ENCODE measurements at regions of chr2 and their contacts with region 1.

Region 1: GRCh38 chr2:42386684-42387083 is 25.7 kb upstream of the COX7A2L start:
- DNase-seq: no peak
- H3K4me3 ChIP-seq: no peak overlapping the region
- H3K27ac ChIP-seq: no peak overlapping the region
- H3K4me1 ChIP-seq: no peaks in the 10 kb centered on the region
- H3K27me3 ChIP-seq: no peaks in the 10 kb centered on the region
- CTCF ChIP-seq: peak; percentile 73

Region 2: DNA sequence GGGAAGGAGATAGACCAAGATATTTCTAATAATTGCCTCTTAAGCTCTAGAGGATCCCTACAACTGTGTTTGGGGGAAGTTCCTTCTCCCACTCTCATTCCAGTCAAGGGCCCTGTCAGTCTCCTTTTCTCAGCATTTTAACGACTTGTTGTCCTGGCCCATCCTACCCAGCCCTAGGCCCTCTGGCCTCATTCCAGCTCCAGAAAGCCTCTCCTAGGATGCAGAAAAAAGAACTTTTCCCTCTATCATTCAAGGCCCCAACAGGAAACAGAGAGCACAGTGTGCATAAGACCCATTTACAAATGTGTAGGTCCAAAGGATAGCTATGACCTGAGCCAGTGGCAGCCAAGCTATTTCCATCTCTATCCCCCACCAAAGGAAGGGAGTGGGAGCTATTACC is 324.8 kb before region 1 on chr2:
- CTCF ChIA-PET with region 1: interaction called, 16 read pairs
- POLR2A ChIA-PET with region 1: no interaction called
- intact Hi-C with region 1: no loop called
- DNase-seq: no peak
- H3K4me3 ChIP-seq: no peak overlapping the region
- H3K27ac ChIP-seq: no peak overlapping the region
- H3K4me1 ChIP-seq: no peaks in the 10 kb centered on the region
- H3K27me3 ChIP-seq: no peaks in the 10 kb centered on the region
- CTCF ChIP-seq: no peak

Region 3: GRCh38 chr2:42138163-42139016 is 248.3 kb before region 1 on chr2:
- CTCF ChIA-PET with region 1: no interaction called
- POLR2A ChIA-PET with region 1: interaction called, 10 read pairs
- intact Hi-C with region 1: no loop called
- DNase-seq: peak; percentile 74 to 91
- H3K4me3 ChIP-seq: no peak overlapping the region
- H3K27ac ChIP-seq: peak overlapping the region; percentile 73
- H3K4me1 ChIP-seq: peaks cover 90% of the 10 kb centered on the region
- H3K27me3 ChIP-seq: no peaks in the 10 kb centered on the region
- CTCF ChIP-seq: no peak

Region 4: GRCh38 chr2:42575458-42576064 is 188.9 kb after region 1 on chr2:
- CTCF ChIA-PET with region 1: interaction called, 13 read pairs
- POLR2A ChIA-PET with region 1: no interaction called
- intact Hi-C with region 1: no loop called
- DNase-seq: no peak
- H3K4me3 ChIP-seq: no peak overlapping the region
- H3K27ac ChIP-seq: no peak overlapping the region
- H3K4me1 ChIP-seq: peaks cover 9% of the 10 kb centered on the region; the same call in 1 of the 2 replicates
- H3K27me3 ChIP-seq: no peaks in the 10 kb centered on the region
- CTCF ChIP-seq: no peak

Region 5: DNA sequence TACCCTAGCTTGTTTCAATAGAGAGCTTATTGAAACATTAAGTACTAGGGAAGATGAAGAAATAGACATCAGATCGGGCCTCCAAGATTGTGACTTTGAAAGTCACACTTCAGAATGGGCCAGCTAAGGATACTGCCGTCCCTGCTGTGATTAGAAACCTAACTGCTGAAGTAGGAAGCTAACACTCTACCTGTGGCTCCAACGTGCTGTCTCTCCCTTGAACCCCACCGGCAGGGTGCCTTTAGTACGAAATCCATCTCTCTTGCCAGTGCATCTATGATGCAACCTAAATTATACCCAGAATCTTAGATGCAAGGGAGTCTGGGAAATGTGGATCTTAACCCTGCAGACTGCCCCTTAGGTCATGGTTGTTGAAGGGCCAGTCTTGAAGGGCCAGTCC is 298.6 kb after region 1 on chr2:
- CTCF ChIA-PET with region 1: interaction called, 13 read pairs
- POLR2A ChIA-PET with region 1: no interaction called
- intact Hi-C with region 1: no loop called
- DNase-seq: no peak
- H3K4me3 ChIP-seq: no peak overlapping the region
- H3K27ac ChIP-seq: no peak overlapping the region
- H3K4me1 ChIP-seq: no peaks in the 10 kb centered on the region
- H3K27me3 ChIP-seq: no peaks in the 10 kb centered on the region
- CTCF ChIP-seq: no peak